ENCODE measurements at regions of chr12 and their contacts with region 1.

Region 1: DNA sequence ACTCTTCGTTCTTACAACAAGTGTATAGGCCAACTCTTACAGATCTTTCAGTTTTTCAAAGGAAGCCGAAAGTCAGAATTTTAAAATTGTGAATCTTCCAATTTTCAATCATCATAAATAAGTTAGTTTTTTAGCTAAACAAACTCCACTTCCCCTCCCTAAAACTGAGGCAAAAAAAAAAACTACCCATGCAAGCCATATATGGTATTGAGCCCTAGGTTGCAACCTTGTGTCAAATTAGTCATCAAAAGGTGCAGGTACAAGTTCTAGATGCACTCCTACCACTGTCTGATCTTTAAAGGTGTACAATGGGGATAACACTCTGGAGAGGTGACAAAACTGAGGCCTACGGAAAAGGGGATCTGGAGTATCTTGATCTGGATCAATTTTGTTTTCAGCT is 97.9 kb downstream of the PAWR start:
- DNase-seq: no peak
- H3K4me3 ChIP-seq: no peak overlapping the region
- H3K27ac ChIP-seq: no peak overlapping the region
- H3K4me1 ChIP-seq: no peaks in the 10 kb centered on the region
- H3K27me3 ChIP-seq: no peaks in the 10 kb centered on the region
- CTCF ChIP-seq: no peak

Region 2: GRCh38 chr12:78938341-78939084 is 654.4 kb before region 1 on chr12:
- CTCF ChIA-PET with region 1: interaction called, 10 read pairs
- POLR2A ChIA-PET with region 1: no interaction called
- intact Hi-C with region 1: no loop called
- DNase-seq: no peak
- H3K4me3 ChIP-seq: no peak overlapping the region
- H3K27ac ChIP-seq: no peak overlapping the region
- H3K4me1 ChIP-seq: no peaks in the 10 kb centered on the region
- H3K27me3 ChIP-seq: no peaks in the 10 kb centered on the region
- CTCF ChIP-seq: no peak

Measured in PC-9 (cell line).